ENCODE measurements at regions of chr17 and their contacts with region 1.

Region 1: GRCh38 chr17:59311130-59311920 is 20.1 kb upstream of the YPEL2 start:
- DNase-seq: peak; percentile 57
- H3K27ac ChIP-seq: no peak overlapping the region
- CTCF ChIP-seq: peak; percentile 88

Region 2: GRCh38 chr17:58885402-58886009 is 425.8 kb before region 1 on chr17:
- CTCF ChIA-PET with region 1: no interaction called
- POLR2A ChIA-PET with region 1: no interaction called
- DNase-seq: no peak
- H3K27ac ChIP-seq: no peak overlapping the region
- CTCF ChIP-seq: no peak

Region 3: GRCh38 chr17:59199398-59199797 is 111.9 kb before region 1 on chr17:
- CTCF ChIA-PET with region 1: no interaction called
- POLR2A ChIA-PET with region 1: no interaction called
- DNase-seq: no peak
- H3K27ac ChIP-seq: no peak overlapping the region
- CTCF ChIP-seq: no peak

Region 4: DNA sequence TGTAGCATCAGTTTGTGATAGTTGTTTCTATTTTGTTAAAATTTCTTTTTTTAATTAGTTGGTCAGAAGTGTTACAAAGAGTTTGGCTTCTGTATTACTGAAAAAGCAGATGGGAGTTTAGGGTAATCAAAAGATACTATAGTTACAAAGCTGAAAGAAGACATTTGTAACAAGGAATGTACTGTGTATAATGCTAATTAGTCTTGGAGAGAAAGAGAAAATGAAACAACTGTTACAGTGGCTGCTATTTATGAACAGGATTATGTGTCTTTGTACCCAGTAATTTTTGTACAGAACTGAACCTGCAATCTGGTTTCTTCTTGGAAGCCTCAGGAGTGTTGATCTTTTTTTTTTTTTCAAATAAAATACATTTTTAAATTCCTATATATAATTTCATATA is 76.7 kb before region 1 on chr17:
- CTCF ChIA-PET with region 1: no interaction called
- POLR2A ChIA-PET with region 1: no interaction called
- DNase-seq: no peak
- H3K27ac ChIP-seq: no peak overlapping the region
- CTCF ChIP-seq: no peak

Region 5: DNA sequence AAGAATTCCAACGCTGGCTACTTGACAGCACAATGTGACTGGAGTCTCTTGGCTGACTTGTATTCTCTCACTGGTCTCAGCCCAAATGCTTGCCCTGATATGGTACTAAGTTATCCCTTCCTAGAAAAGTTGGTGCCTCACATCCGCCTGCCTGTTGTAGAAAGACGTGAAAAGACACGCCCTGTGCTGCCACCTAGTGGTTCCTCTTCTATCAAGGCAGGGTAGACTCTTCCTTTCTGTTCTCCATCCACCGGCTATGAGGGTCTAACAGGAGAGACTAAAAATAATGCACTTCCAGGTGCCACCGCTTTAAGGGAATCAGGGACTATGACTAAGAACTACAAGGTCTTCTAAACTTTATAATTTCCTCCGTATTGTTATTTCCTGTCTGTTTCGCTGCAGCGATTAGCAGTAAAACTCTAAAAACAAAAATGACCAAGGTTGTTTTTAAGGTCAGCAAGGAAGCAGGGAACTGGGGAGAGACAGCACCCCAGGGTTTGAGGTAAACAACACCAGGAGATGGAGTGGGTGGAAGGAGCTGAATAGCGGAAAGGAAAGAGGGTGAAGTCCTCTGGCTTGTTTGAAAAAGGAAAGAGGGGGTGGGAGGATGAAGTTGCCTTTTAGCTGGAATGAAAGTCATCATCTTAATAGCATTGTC is 129.6 kb after region 1 on chr17:
- CTCF ChIA-PET with region 1: interaction called, 51 read pairs
- POLR2A ChIA-PET with region 1: no interaction called
- DNase-seq: peak; percentile 77
- H3K27ac ChIP-seq: no peak overlapping the region
- CTCF ChIP-seq: peak; percentile 89